Dorsolateral prefrontal cortex (tissue), 120 donors: ENCODE measurements at regions of chr13 and their contacts with region 1.

Region 1: DNA sequence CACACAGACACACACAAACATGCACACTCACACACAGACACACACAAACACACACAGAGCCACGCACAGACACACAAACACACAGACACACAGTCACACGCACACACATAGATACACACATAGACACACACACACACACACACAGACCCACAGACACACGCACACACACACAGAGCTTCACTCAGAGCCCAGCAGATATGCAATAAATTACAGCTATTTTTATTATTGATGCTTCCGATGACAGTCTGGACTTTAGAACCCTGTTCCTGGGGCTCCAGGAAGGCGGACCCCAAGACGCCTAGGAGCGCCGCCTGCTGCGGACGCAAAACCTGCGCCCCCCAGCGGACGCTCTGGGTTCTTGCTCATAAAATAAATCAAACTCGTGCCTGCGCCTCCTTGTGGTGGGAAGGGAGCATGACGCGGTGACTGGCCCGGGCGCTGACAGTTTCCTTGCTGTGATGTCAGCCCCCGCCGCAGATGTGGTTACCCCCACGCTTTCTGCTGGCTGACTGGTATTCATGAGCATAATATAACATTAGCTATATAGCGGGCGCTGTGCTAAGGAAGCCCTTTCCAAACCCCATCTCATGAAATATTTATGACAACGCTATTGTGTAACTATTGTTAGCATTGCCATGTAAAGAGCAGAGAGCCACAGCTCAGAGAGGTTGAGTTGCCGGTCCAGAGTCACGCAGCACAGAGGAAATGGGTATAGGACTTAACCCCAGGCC is 64.4 kb upstream of the TM9SF2 start:
- DNase-seq: peak; percentile 57 to 92 (median 84)
- H3K4me3 ChIP-seq: peak overlapping the region in 45 of 59 donors; percentile 1 to 52 (median 27)
- H3K27ac ChIP-seq: no peak overlapping the region
- H3K27me3 ChIP-seq: peaks cover 0 to 3% (median 0%) of the 10 kb centered on the region in 45 donors
- CTCF ChIP-seq: peak in 55 of 56 donors; percentile 95 to 100 (median 100)

Region 2: DNA sequence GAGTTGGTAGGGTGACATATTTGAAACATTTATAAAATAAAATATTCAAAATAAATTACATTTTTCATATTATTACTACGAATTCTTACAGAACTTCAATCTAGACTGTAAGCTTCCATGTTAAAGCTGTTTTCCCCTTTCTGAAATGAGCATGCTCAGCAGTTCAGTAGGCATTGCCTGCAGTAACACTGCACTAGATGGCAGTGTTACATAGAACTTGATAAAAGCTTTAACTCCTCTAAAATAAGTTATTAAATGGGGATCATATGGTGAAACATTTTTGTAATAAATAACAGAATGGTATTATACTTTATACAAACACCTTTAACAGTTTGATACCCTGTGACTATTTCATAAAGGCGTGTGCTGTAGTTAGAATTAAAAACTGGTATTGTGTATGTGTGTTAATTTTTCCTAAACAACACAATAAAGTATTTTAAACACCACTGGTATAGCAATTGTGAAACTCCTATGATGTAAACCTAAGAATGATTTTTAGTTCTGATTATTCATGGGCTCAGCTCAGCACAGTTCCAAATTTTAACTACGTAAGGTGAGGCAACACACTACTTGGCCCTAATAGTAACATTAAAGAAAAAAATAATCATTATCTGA is 167.1 kb before region 1 on chr13:
- intact Hi-C with region 1: loop called (anchors 2 kb)
- DNase-seq: peak in 1 of 10 donors; percentile 18
- H3K4me3 ChIP-seq: no peak overlapping the region
- H3K27ac ChIP-seq: peak overlapping the region in 1 of 59 donors; percentile 16
- H3K27me3 ChIP-seq: no peaks in the 10 kb centered on the region
- CTCF ChIP-seq: peak; percentile 32 to 87 (median 70)